ENCODE measurements at regions of chr5 and their contacts with region 1.

Region 1: GRCh38 chr5:33969572-33970452 is 14.7 kb downstream of the SLC45A2 start:
- DNase-seq: peak; percentile 43
- H3K4me3 ChIP-seq: no peak overlapping the region
- H3K27ac ChIP-seq: no peak overlapping the region
- H3K27me3 ChIP-seq: peaks cover 11% of the 10 kb centered on the region
- CTCF ChIP-seq: peak; percentile 96

Region 2: DNA sequence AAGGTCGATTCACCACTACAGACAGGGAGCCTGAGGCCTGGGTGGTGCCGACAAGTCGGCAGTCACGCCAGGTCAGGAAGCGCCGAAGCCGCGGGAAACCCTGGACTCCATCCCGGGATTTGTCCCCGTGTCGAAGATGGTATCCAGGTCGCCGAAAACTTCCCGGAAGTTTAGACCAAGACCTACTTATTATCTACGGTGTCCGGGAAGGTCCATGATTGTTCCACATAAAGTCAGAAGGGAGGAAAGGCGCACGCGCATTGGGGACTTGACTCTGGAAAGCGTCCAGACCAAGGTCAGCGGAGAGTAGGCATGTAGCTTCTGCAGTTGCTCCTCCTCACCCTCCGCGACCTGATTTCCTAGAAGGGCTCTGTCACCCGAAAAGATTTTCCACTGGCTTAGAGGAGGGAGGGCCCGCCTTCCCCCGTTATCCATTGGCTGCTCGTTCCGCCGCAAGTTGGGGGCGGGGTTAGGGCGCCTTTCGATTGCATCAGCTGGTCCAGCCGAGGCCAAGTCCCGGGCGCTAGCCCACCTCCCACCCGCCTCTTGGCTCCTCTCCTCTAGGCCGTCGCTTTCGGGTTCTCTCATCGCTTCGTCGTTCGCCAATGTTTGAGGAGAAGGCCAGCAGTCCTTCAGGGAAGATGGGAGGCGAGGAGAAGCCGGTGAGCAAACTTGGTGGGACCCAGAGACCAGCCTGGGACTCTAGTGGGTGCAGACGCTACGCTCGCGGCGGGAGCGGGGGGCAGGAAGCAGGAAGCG is 529.2 kb before region 1 on chr5 and contains the start of gene TARS1:
- CTCF ChIA-PET with region 1: interaction called, 15 read pairs
- POLR2A ChIA-PET with region 1: no interaction called
- DNase-seq: peak; percentile 100
- H3K4me3 ChIP-seq: peak within 1 kb of the TSS; percentile 92
- H3K27ac ChIP-seq: peak within 1 kb of the TSS; percentile 99
- H3K27me3 ChIP-seq: no peaks in the 10 kb centered on the region
- CTCF ChIP-seq: no peak
- polyA plus RNA-seq, gene TARS1: 175 and 229 TPM in 2 replicates

Region 3: DNA sequence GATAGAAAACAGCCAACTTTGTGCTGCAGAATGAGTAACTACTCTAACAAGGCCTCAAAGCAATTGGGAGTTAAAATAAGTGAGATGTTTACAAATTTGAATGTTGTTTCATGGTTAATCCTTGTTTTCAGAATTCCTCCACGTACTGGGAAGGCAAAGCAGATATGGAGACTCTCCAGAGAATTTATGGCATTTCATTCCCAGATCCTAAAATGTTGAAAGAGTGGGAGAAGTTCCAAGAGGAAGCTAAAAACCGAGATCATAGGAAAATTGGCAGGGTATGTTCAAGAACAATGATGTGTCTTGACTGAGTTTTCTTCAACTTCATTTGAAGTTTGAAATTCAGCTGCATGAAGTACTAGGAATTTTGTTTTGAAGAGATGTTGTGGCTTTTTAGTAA is 512.7 kb before region 1 on chr5:
- CTCF ChIA-PET with region 1: interaction called, 11 read pairs
- POLR2A ChIA-PET with region 1: no interaction called
- DNase-seq: no peak
- H3K4me3 ChIP-seq: no peak overlapping the region
- H3K27ac ChIP-seq: no peak overlapping the region
- H3K27me3 ChIP-seq: no peaks in the 10 kb centered on the region
- CTCF ChIP-seq: no peak

Region 4: DNA sequence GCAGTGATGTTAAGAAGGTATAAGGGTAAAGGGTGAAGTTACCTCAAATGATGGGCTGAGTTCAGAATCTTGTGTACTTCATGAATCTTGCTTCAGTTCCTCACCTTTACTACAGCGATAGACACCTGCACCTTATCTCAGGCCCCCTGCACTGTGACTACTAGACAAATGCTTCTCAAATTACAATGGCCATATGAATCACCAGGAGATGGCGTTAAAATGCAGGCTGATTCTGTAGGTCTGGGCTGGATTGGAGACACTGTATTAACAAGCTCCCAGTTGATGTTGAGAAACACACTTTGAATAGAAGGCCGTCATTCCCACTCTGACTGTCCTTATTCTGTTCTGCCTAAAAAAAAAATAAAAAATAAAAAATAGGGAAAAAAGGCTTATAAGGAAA is 499.3 kb before region 1 on chr5:
- CTCF ChIA-PET with region 1: interaction called, 126 read pairs
- POLR2A ChIA-PET with region 1: no interaction called
- DNase-seq: peak; percentile 37
- H3K4me3 ChIP-seq: no peak overlapping the region
- H3K27ac ChIP-seq: no peak overlapping the region
- H3K27me3 ChIP-seq: no peaks in the 10 kb centered on the region
- CTCF ChIP-seq: peak; percentile 74

Region 5: GRCh38 chr5:33479311-33479710 is 490.5 kb before region 1 on chr5:
- CTCF ChIA-PET with region 1: interaction called, 21 read pairs
- POLR2A ChIA-PET with region 1: no interaction called
- DNase-seq: no peak
- H3K4me3 ChIP-seq: no peak overlapping the region
- H3K27ac ChIP-seq: no peak overlapping the region
- H3K27me3 ChIP-seq: no peaks in the 10 kb centered on the region
- CTCF ChIP-seq: no peak

Region 6: GRCh38 chr5:33957577-33958150 is 12.1 kb before region 1 on chr5:
- CTCF ChIA-PET with region 1: interaction called, 30 read pairs
- POLR2A ChIA-PET with region 1: no interaction called
- DNase-seq: no peak
- H3K4me3 ChIP-seq: no peak overlapping the region
- H3K27ac ChIP-seq: no peak overlapping the region
- H3K27me3 ChIP-seq: peaks cover 4% of the 10 kb centered on the region
- CTCF ChIP-seq: no peak

Region 7: GRCh38 chr5:33981408-33982162 is 11.8 kb after region 1 on chr5:
- CTCF ChIA-PET with region 1: interaction called, 24 read pairs
- POLR2A ChIA-PET with region 1: no interaction called
- DNase-seq: no peak
- H3K4me3 ChIP-seq: no peak overlapping the region
- H3K27ac ChIP-seq: no peak overlapping the region
- H3K27me3 ChIP-seq: no peaks in the 10 kb centered on the region
- CTCF ChIP-seq: no peak

Measured in AG04450 (cell line).